ENCODE measurements at regions of chr5 and their contacts with region 1.

Region 1: DNA sequence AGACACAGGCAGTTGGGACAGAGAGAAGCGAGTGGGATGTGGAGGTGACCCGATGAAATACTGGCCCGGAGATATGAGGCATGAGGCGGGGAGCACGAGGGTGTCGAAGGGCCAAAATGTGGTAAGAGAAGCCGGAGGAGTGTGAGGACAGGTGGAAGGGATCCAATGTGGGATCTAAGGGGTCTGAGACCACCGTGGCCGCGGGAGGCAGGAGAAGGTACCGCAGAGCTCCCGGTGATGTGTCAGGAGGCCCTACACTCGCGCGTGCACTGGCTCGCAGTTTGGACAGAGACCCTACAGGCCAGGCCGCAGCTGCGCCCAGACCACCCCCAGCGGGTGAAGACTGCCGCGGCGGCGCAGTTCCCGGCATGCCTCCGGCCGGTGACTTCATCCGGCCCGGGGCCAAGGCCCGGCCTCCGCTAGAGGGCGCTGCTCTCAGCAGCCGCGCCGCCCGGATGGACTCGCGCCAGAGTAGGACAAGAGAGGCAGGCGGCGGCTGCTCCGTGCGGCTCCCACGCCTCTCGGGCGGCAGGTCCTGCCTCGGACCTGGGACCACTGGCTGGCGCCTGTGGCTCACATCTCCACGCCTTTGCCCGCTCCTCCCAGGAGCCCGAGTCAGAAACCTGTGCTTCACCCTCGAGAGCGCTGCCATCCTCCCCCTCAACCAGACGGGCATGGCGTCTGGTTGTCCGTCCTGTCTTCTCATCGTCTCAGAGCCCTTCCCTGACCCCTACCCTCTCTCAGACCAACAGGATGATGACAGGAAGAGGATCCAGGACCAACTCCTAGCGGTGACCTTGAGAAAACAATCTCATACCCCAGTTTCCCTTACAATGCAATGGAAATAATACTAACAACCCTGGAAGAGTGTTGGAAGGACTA is 35.4 kb upstream of the STING1 start:
- DNase-seq: peak; percentile 91
- H3K4me3 Mint-ChIP-seq: peak overlapping the region; percentile 81
- H3K27ac Mint-ChIP-seq: peak overlapping the region; percentile 87
- H3K4me1 Mint-ChIP-seq: peaks cover 16% of the 10 kb centered on the region
- H3K27me3 Mint-ChIP-seq: no peaks in the 10 kb centered on the region
- CTCF ChIP-seq: peak; percentile 99

Region 2: GRCh38 chr5:139038613-139039305 is 479.2 kb before region 1 on chr5:
- CTCF ChIA-PET with region 1: no interaction called
- POLR2A ChIA-PET with region 1: no interaction called
- intact Hi-C with region 1: no loop called
- DNase-seq: no peak
- H3K4me3 Mint-ChIP-seq: no peak overlapping the region
- H3K27ac Mint-ChIP-seq: no peak overlapping the region
- H3K4me1 Mint-ChIP-seq: no peaks in the 10 kb centered on the region
- H3K27me3 Mint-ChIP-seq: no peaks in the 10 kb centered on the region
- CTCF ChIP-seq: no peak

Region 3: GRCh38 chr5:139415221-139415861 is 102.6 kb before region 1 on chr5:
- CTCF ChIA-PET with region 1: interaction called, 434 read pairs
- POLR2A ChIA-PET with region 1: interaction called, 4 read pairs
- intact Hi-C with region 1: no loop called
- DNase-seq: peak; percentile 26
- H3K4me3 Mint-ChIP-seq: no peak overlapping the region
- H3K27ac Mint-ChIP-seq: no peak overlapping the region
- H3K4me1 Mint-ChIP-seq: no peaks in the 10 kb centered on the region
- H3K27me3 Mint-ChIP-seq: no peaks in the 10 kb centered on the region
- CTCF ChIP-seq: no peak

Region 4: GRCh38 chr5:139430015-139430414 is 87.9 kb before region 1 on chr5:
- CTCF ChIA-PET with region 1: interaction called, 434 read pairs
- POLR2A ChIA-PET with region 1: interaction called, 6 read pairs
- intact Hi-C with region 1: no loop called
- DNase-seq: no peak
- H3K4me3 Mint-ChIP-seq: no peak overlapping the region
- H3K27ac Mint-ChIP-seq: no peak overlapping the region
- H3K4me1 Mint-ChIP-seq: no peaks in the 10 kb centered on the region
- H3K27me3 Mint-ChIP-seq: no peaks in the 10 kb centered on the region
- CTCF ChIP-seq: no peak

Region 5: DNA sequence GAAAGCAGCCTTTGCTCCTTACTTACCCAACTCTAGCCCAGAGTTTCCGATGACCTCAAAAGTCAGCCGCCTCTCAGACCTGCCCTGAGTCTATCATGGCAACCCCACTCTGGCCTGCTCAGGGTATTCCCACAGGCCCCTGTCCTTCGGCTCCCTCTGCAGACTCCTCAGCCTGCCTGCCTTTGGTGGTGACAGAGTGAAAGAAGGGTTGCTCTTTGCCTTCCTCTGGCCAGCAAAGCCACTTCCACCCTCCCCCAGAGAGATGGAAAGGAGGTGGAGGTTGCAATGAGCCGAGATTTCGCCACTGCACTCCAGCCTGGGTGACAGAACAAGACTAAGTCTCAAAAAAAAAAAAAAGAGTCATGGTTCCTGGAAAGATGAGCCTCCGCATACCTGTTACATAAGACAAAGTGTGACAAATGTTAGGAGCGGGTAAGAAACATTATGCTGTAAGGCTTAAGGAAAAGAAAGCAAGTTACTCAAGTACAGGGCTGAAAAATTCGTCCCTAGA is 49.4 kb before region 1 on chr5:
- CTCF ChIA-PET with region 1: interaction called, 6 read pairs
- POLR2A ChIA-PET with region 1: no interaction called
- intact Hi-C with region 1: loop called (anchors 1 kb)
- DNase-seq: peak; percentile 45
- H3K4me3 Mint-ChIP-seq: no peak overlapping the region
- H3K27ac Mint-ChIP-seq: no peak overlapping the region
- H3K4me1 Mint-ChIP-seq: peaks cover 6% of the 10 kb centered on the region
- H3K27me3 Mint-ChIP-seq: no peaks in the 10 kb centered on the region
- CTCF ChIP-seq: no peak

Region 6: DNA sequence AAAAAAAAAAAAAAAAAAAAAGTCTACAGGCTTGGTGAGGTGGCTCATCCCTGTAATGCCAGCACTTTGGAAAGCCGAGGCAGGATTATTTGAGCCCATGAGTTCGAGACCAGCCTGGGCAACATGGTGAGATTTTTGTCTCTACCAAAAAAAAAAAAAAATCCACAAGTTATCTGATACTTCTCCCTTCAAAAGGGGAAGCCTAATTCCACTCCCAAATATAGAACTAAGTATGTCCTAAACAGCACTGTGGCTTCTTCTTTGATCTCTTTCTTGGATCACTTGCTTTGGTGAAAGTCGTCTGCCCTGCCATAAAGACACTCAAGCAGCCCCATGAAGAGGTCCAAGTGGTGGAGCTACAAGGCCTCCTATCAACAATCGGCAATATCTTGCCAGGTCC is 16.5 kb before region 1 on chr5:
- CTCF ChIA-PET with region 1: interaction called, 33 read pairs
- POLR2A ChIA-PET with region 1: no interaction called
- intact Hi-C with region 1: no loop called
- DNase-seq: no peak
- H3K4me3 Mint-ChIP-seq: no peak overlapping the region
- H3K27ac Mint-ChIP-seq: no peak overlapping the region
- H3K4me1 Mint-ChIP-seq: no peaks in the 10 kb centered on the region
- H3K27me3 Mint-ChIP-seq: no peaks in the 10 kb centered on the region
- CTCF ChIP-seq: no peak

Region 7: GRCh38 chr5:139690064-139690802 is 172.3 kb after region 1 on chr5:
- CTCF ChIA-PET with region 1: interaction called, 4 read pairs
- POLR2A ChIA-PET with region 1: no interaction called
- intact Hi-C with region 1: loop called (anchors 1 kb)
- DNase-seq: peak; percentile 66
- H3K4me3 Mint-ChIP-seq: no peak overlapping the region
- H3K27ac Mint-ChIP-seq: no peak overlapping the region
- H3K4me1 Mint-ChIP-seq: peaks cover 6% of the 10 kb centered on the region
- H3K27me3 Mint-ChIP-seq: no peaks in the 10 kb centered on the region
- CTCF ChIP-seq: peak; percentile 84

Region 8: GRCh38 chr5:139787568-139788293 is 269.8 kb after region 1 on chr5:
- CTCF ChIA-PET with region 1: no interaction called
- POLR2A ChIA-PET with region 1: no interaction called
- intact Hi-C with region 1: no loop called
- DNase-seq: peak; percentile 86
- H3K4me3 Mint-ChIP-seq: peak overlapping the region; percentile 78
- H3K27ac Mint-ChIP-seq: peak overlapping the region; percentile 47
- H3K4me1 Mint-ChIP-seq: no peaks in the 10 kb centered on the region
- H3K27me3 Mint-ChIP-seq: peaks cover 38% of the 10 kb centered on the region
- CTCF ChIP-seq: peak; percentile 100